Activated CD4-positive, alpha-beta T cell treated with anti-CD3 and anti-CD28 coated beads, Interleukin-2, amount 10 ng/mL, durations not matched to agents 7 days and 5 days (primary cell): ENCODE measurements at regions of chr14 and their contacts with region 1.

Region 1: GRCh38 chr14:45284802-45285201 is 31.8 kb upstream of the MIS18BP1 start:
- DNase-seq: no peak
- H3K4me3 Mint-ChIP-seq: no peak overlapping the region
- H3K27ac Mint-ChIP-seq: no peak overlapping the region
- H3K4me1 Mint-ChIP-seq: no peaks in the 10 kb centered on the region
- H3K27me3 Mint-ChIP-seq: peaks cover 2% of the 10 kb centered on the region

Region 2: DNA sequence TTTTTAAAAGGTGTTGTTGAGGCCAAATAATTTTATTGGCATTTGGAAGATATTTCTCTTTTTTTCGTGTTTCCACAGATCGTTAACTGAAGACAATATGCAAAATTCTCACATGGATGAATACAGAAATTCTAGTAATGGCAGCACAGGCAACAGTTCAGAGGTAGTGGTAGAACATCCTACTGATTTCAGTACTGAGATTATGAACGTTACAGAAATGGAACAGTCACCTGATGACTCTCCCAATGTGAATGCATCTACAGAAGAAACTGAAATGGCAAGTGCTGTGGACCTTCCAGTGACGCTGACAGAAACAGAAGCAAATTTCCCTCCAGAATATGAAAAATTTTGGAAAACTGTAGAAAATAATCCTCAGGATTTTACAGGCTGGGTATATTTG is 189.7 kb before region 1 on chr14:
- CTCF ChIA-PET with region 1: no interaction called
- POLR2A ChIA-PET with region 1: interaction called, 10 read pairs
- DNase-seq: no peak
- H3K4me3 Mint-ChIP-seq: no peak overlapping the region
- H3K27ac Mint-ChIP-seq: no peak overlapping the region
- H3K4me1 Mint-ChIP-seq: peaks cover 12% of the 10 kb centered on the region
- H3K27me3 Mint-ChIP-seq: no peaks in the 10 kb centered on the region